ENCODE measurements at regions of chr5 and their contacts with region 1.

Region 1: GRCh38 chr5:131289738-131290137 is 25.9 kb downstream of the CDC42SE2 start:
- DNase-seq: peak; percentile 76
- H3K4me3 Mint-ChIP-seq: peak overlapping the region; percentile 81
- H3K27ac Mint-ChIP-seq: peak overlapping the region; percentile 96
- H3K4me1 Mint-ChIP-seq: peaks cover 56% of the 10 kb centered on the region
- H3K27me3 Mint-ChIP-seq: no peaks in the 10 kb centered on the region

Region 2: GRCh38 chr5:131170540-131171275 is 119.0 kb before region 1 on chr5 and contains the start of gene LYRM7:
- intact Hi-C with region 1: loop called (anchors 1 kb)
- DNase-seq: peak; percentile 99
- H3K4me3 Mint-ChIP-seq: peak within 1 kb of the TSS; percentile 100
- H3K27ac Mint-ChIP-seq: peak within 1 kb of the TSS; percentile 97
- H3K4me1 Mint-ChIP-seq: peaks cover 45% of the 10 kb centered on the region
- H3K27me3 Mint-ChIP-seq: no peaks in the 10 kb centered on the region
- total RNA-seq, gene LYRM7: 17.9 and 18.1 TPM in 2 replicates

Region 3: GRCh38 chr5:131252824-131253171 is 36.9 kb before region 1 on chr5:
- intact Hi-C with region 1: loop called (anchors 5 kb)
- DNase-seq: peak; percentile 94
- H3K4me3 Mint-ChIP-seq: peak overlapping the region; percentile 85
- H3K27ac Mint-ChIP-seq: peak overlapping the region; percentile 96
- H3K4me1 Mint-ChIP-seq: peaks cover 55% of the 10 kb centered on the region
- H3K27me3 Mint-ChIP-seq: no peaks in the 10 kb centered on the region

Region 4: GRCh38 chr5:131263648-131264450 is 25.9 kb before region 1 on chr5 and contains the start of gene CDC42SE2:
- intact Hi-C with region 1: loop called (anchors 2 kb)
- DNase-seq: peak; percentile 97
- H3K4me3 Mint-ChIP-seq: peak within 1 kb of the TSS; percentile 85
- H3K27ac Mint-ChIP-seq: peak within 1 kb of the TSS; percentile 93
- H3K4me1 Mint-ChIP-seq: peaks cover 34% of the 10 kb centered on the region
- H3K27me3 Mint-ChIP-seq: no peaks in the 10 kb centered on the region
- total RNA-seq, gene CDC42SE2: 96.2 and 99.0 TPM in 2 replicates

Region 5: GRCh38 chr5:131270809-131271208 is 18.9 kb before region 1 on chr5:
- intact Hi-C with region 1: loop called (anchors 1 kb)
- DNase-seq: no peak
- H3K4me3 Mint-ChIP-seq: peak overlapping the region; percentile 74
- H3K27ac Mint-ChIP-seq: peak overlapping the region; percentile 90
- H3K4me1 Mint-ChIP-seq: peaks cover 47% of the 10 kb centered on the region
- H3K27me3 Mint-ChIP-seq: no peaks in the 10 kb centered on the region

Region 6: DNA sequence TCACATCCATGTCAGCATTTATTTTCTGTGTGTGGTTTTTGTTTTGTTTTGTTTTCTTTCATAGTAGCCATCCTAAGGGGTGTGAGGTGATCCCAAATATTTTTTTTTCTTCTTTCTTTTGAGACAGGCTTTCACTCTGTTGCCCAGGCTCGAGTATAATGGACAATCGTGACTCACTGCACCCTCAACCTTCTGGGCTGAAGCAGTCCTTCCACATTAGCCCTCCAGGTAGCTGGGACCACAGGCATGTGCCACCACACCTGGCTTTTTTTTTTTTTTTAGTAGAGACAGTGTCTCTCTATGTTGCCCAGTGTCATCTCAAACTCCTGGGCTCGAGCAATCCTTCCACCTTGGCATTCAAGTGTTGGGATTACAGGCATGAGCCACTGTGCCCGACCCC is 33.2 kb after region 1 on chr5:
- intact Hi-C with region 1: loop called (anchors 2 kb)
- DNase-seq: no peak
- H3K4me3 Mint-ChIP-seq: peak overlapping the region; percentile 12
- H3K27ac Mint-ChIP-seq: peak overlapping the region; percentile 10
- H3K4me1 Mint-ChIP-seq: peaks cover 43% of the 10 kb centered on the region
- H3K27me3 Mint-ChIP-seq: no peaks in the 10 kb centered on the region

Region 7: DNA sequence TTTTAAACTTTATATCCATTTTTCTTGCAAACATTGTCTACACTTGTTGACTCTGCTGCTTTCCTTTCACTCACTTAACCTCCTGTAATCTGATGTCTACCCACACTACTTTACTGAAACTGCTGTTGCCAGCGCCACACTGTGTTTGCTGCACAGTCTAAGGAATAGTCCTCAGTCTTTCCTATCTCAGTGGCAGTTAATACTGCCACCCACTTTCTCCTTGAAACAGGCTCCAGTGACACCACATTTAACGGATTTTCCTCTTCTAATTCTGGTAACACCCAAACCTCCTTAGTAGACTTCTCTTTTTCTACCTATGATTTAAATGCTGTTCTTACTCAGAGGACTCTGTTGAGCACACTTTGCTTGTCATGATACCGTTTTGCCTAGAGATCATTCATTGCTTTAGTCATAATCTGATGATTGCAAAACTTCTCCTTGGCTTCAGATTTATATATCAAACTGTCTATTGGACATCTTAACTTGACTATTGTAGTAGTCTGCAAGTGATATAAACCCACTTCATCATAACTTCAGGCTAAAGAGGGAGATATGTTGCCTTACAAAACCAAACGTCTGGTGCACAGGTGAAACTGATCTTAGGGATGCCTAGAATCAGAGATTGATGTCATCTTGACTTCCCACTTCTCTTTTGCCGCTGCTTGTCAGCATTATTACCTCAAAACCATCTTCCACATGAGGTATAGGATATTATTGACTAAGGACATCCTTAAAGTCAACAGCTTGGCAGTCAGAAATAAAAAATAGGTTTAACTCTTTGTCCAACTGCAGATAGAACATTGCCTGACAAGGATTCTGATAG is 68.2 kb after region 1 on chr5:
- intact Hi-C with region 1: loop called (anchors 2 kb)
- DNase-seq: peak; percentile 80
- H3K4me3 Mint-ChIP-seq: peak overlapping the region; percentile 49
- H3K27ac Mint-ChIP-seq: peak overlapping the region; percentile 81
- H3K4me1 Mint-ChIP-seq: peaks cover 45% of the 10 kb centered on the region
- H3K27me3 Mint-ChIP-seq: no peaks in the 10 kb centered on the region

Region 8: DNA sequence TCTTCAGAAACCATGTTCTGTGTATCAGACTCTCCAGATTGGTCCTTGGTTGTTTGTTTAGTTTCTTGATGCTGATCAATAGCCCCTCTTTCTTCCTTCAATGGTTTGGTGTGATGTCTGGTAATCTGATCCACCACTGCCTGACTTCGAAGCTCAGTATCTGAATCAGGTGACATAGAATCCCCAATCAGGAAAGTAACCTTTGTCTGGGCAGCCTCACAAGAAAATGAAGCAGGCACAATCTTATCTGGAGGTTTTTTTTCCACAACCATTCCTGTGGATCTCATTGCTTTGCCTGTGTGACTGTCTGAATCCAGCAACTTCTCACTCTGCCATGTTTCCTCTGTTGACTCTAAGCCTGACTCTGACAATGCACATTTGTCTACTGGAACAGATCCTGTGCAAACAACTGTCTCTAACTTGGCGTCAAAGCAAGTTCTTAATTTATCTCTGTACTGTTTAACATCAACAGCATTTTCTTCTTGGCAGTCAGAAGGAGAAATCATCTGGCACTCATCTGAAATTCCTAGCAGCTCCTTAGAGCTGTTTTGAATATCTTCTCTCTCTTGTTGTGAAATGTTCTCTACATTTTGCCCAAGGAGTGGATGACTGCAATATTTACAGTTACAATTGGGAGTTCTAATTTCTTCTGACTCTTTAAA is 382.4 kb after region 1 on chr5:
- intact Hi-C with region 1: no loop called
- DNase-seq: no peak
- H3K4me3 Mint-ChIP-seq: no peak overlapping the region
- H3K27ac Mint-ChIP-seq: no peak overlapping the region
- H3K4me1 Mint-ChIP-seq: peaks cover 31% of the 10 kb centered on the region
- H3K27me3 Mint-ChIP-seq: no peaks in the 10 kb centered on the region

Measured in activated CD4-positive, alpha-beta T cell treated with anti-CD3 and anti-CD28 coated beads, Interleukin-2, amount 10 ng/mL, durations not matched to agents 24 days and 14 days (primary cell).